Naive thymus-derived CD4-positive, alpha-beta T cell (primary cell): ENCODE measurements at regions of chr16 and their contacts with region 1.

Region 1: DNA sequence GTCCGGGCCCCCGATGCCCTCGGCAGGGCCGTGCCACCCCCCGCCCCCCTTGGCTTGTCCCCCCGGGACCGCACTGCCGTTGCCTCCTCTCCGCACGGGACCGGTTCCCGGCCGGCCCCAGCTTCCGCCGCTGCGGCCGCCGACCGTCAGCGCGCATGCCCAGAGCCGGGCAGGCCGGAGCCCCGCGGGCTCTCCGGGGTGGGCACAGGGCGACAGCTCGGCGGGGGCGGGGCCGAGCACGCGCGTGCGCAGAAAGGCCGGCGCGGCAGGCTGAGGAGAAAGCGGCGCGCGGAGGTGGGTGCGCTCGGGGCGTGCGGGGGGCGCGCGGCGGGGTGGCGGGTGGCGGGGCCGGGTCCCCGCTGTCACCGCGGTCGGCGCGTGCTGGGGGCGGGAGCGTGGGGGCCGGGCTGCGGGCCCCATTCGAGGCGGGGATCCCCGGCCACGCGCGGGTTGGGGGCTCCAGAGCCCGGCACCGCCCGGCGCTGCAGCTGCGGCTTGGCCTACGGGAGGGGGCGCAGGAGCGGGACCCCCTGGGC is at the start of gene TBC1D24:
- DNase-seq: peak; percentile 41 to 94 (median 65)
- ATAC-seq: peak; percentile 80
- H3K4me3 ChIP-seq: peak within 1 kb of the TSS; percentile 71
- H3K4me3 Mint-ChIP-seq: peak within 1 kb of the TSS; percentile 61 to 81 (median 73)
- H3K27ac ChIP-seq: peak within 1 kb of the TSS; percentile 66
- H3K27ac Mint-ChIP-seq: no peak within 1 kb of the TSS
- H3K4me1 ChIP-seq: peaks cover 11 to 12% of the 10 kb centered on the region in 2 donors
- H3K4me1 Mint-ChIP-seq: peaks cover 14 to 34% (median 17%) of the 10 kb centered on the region in 7 donors
- H3K27me3 ChIP-seq: peaks cover 4 to 14% of the 10 kb centered on the region in 2 donors
- H3K27me3 Mint-ChIP-seq: peaks cover 7 to 31% (median 13%) of the 10 kb centered on the region in 5 donors
- total RNA-seq, gene TBC1D24: 5.4 to 13.5 (median 9.2) TPM

Region 2: GRCh38 chr16:2459647-2460390 is 15.1 kb before region 1 on chr16 and contains the start of gene TEDC2:
- CTCF ChIA-PET with region 1: no interaction called
- POLR2A ChIA-PET with region 1: interaction called, 5 read pairs
- intact Hi-C with region 1: loop called (anchors 1 kb)
- DNase-seq: peak; percentile 92 to 98 (median 94)
- ATAC-seq: peak; percentile 100
- H3K4me3 ChIP-seq: peak within 1 kb of the TSS; percentile 63
- H3K4me3 Mint-ChIP-seq: peak within 1 kb of the TSS; percentile 75 to 95 (median 88)
- H3K27ac ChIP-seq: peak within 1 kb of the TSS; percentile 57
- H3K27ac Mint-ChIP-seq: peak within 1 kb of the TSS in 7 of 9 donors; percentile 3 to 94 (median 69)
- H3K4me1 ChIP-seq: peaks cover 5 to 8% of the 10 kb centered on the region in 2 donors
- H3K4me1 Mint-ChIP-seq: peaks cover 4 to 14% (median 5%) of the 10 kb centered on the region in 7 donors
- H3K27me3 ChIP-seq: no peaks in the 10 kb centered on the region
- H3K27me3 Mint-ChIP-seq: no peaks in the 10 kb centered on the region
- total RNA-seq, gene TEDC2: 0.32 to 16.7 (median 0.71) TPM in 4 of 5 experiments, not detected in the other

Region 3: GRCh38 chr16:2520092-2520783 is 45.3 kb after region 1 on chr16 and contains the start of gene AMDHD2:
- CTCF ChIA-PET with region 1: no interaction called
- POLR2A ChIA-PET with region 1: no interaction called
- intact Hi-C with region 1: loop called in 1 of 2 experiments (anchors 1 kb)
- DNase-seq: peak; percentile 81 to 90 (median 89)
- ATAC-seq: peak; percentile 75
- H3K4me3 ChIP-seq: peak within 1 kb of the TSS; percentile 55
- H3K4me3 Mint-ChIP-seq: peak within 1 kb of the TSS; percentile 81 to 95 (median 90)
- H3K27ac ChIP-seq: peak within 1 kb of the TSS; percentile 100
- H3K27ac Mint-ChIP-seq: peak within 1 kb of the TSS; percentile 85 to 98 (median 96)
- H3K4me1 ChIP-seq: peaks cover 29 to 51% of the 10 kb centered on the region in 2 donors
- H3K4me1 Mint-ChIP-seq: peaks cover 40 to 76% (median 59%) of the 10 kb centered on the region in 7 donors
- H3K27me3 ChIP-seq: no peaks in the 10 kb centered on the region
- H3K27me3 Mint-ChIP-seq: no peaks in the 10 kb centered on the region
- total RNA-seq, gene AMDHD2: 60.0 to 258 (median 112) TPM

Region 4: GRCh38 chr16:2531358-2531766 is 56.4 kb after region 1 on chr16 and contains the start of gene CEMP1:
- CTCF ChIA-PET with region 1: no interaction called
- POLR2A ChIA-PET with region 1: no interaction called
- intact Hi-C with region 1: no loop called
- DNase-seq: peak in 1 of 9 donors; percentile 52
- ATAC-seq: no peak
- H3K4me3 ChIP-seq: peak within 1 kb of the TSS; percentile 71
- H3K4me3 Mint-ChIP-seq: peak within 1 kb of the TSS; percentile 84 to 100 (median 96)
- H3K27ac ChIP-seq: peak within 1 kb of the TSS; percentile 93
- H3K27ac Mint-ChIP-seq: peak within 1 kb of the TSS; percentile 96 to 100 (median 98)
- H3K4me1 ChIP-seq: peaks cover 5 to 6% of the 10 kb centered on the region in 2 donors
- H3K4me1 Mint-ChIP-seq: peaks cover 0 to 28% (median 18%) of the 10 kb centered on the region in 7 donors
- H3K27me3 ChIP-seq: no peaks in the 10 kb centered on the region
- H3K27me3 Mint-ChIP-seq: no peaks in the 10 kb centered on the region
- total RNA-seq, gene CEMP1: 1.4 to 3.3 (median 2.8) TPM in 3 of 5 experiments, not detected in the others

Region 5: DNA sequence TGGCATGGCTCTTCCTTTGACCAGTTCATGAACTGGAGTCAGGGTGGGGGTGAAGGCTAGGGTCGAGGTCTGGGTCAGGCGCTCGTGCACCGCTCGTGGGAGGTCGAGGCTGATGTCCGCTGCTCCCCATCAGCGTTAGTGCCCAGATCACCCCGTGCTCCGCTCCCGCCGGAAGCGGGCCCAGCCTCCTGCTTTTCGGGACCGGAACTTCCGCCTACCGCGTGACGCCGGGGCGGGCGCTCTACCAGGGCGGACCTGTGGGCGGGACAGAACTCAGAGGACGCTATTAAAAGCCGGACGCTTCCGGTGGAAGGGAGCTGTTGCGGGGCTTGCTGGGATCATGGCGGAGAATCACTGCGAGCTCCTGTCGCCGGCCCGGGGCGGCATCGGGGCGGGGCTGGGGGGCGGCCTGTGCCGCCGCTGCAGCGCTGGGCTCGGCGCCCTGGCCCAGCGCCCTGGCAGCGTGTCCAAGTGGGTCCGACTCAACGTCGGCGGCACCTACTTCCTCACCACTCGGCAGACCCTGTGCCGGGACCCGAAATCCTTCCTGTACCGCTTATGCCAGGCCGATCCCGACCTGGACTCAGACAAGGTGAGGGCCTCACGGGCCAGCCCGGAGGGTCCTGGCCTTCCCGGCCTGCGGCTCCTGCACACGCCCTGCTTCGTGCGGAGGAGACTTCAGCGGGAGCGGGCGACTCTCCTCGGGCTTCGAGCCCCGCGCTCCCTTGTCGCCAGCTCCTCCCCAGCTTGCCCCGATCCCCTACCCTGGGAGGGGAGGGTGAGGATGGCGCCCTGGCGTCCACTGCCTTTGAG is 207.5 kb after region 1 on chr16 and contains the start of gene KCTD5:
- CTCF ChIA-PET with region 1: no interaction called
- POLR2A ChIA-PET with region 1: no interaction called
- intact Hi-C with region 1: loop called in 1 of 2 experiments (anchors 5 kb)
- DNase-seq: peak; percentile 89 to 98 (median 94)
- ATAC-seq: peak; percentile 97
- H3K4me3 ChIP-seq: peak within 1 kb of the TSS; percentile 81
- H3K4me3 Mint-ChIP-seq: peak within 1 kb of the TSS; percentile 89 to 99 (median 94)
- H3K27ac ChIP-seq: peak within 1 kb of the TSS; percentile 92
- H3K27ac Mint-ChIP-seq: peak within 1 kb of the TSS; percentile 82 to 99 (median 94)
- H3K4me1 ChIP-seq: peaks cover 8 to 18% of the 10 kb centered on the region in 2 donors
- H3K4me1 Mint-ChIP-seq: peaks cover 12 to 29% (median 25%) of the 10 kb centered on the region in 7 donors
- H3K27me3 ChIP-seq: no peaks in the 10 kb centered on the region
- H3K27me3 Mint-ChIP-seq: no peaks in the 10 kb centered on the region
- total RNA-seq, gene KCTD5: 21.4 to 37.5 (median 24.6) TPM